Posterior cingulate gyrus (tissue), 11 donors: ENCODE measurements at regions of chr7 and their contacts with region 1.

Region 1: DNA sequence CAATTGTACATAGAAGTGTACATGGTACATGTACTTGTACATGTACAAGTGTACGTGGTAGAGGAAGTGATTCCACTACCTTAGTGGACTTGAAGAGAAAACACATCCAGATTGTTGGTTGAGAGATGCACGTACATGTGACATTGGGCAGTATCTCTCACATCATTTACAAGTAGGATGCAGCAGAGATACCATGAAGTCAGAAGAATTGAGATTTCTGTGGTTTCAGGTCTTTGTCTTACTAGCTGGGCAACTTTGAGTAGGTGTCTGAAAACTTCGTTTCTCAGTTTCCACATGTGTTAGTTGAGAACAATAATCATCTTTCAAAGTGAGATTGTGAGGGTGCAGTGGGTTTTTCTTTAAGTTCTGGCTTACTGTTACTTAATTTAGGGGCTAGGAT is 21.5 kb downstream of the CLDN12 start:
- DNase-seq: no peak

Region 2: DNA sequence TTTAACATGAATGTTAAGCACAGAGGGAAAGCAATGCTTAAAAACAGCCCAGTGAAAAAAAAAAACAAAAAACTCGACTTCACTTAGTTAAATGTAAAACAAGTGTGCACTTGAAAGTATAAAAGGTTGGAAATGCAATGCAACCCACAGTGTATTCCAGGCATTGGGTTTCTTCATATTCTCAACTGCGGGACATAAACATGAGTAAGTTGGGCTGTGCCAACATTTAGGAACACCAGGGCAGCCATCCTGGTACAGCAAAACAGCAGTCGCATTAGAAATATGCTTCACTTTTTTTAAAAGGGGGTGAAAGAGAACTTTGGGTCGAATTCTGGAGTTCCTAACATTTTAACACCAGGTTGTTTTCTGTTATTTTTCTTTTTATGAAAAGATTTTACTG is 269.5 kb before region 1 on chr7:
- intact Hi-C with region 1: loop called (anchors 1 kb)
- DNase-seq: no peak

Region 3: DNA sequence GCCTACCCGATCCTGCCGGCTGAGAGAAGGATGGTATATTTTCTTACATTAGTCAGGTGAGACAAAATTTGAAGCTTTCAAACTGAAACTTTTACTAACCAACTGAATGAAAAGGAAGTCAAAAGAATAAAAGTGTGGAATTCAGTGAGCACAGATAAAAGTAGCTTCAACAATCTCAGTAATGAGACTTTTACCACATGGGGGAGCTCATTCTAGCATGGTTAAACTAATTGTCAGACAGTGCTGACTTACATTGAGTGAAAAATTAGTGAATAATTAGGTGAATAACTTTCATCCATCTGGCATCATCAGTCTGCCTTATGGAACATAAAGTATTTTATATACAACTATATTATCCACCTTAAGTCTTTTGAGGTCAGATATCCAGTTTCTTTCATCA is 112.0 kb before region 1 on chr7:
- intact Hi-C with region 1: loop called (anchors 2 kb)
- DNase-seq: no peak

Region 4: DNA sequence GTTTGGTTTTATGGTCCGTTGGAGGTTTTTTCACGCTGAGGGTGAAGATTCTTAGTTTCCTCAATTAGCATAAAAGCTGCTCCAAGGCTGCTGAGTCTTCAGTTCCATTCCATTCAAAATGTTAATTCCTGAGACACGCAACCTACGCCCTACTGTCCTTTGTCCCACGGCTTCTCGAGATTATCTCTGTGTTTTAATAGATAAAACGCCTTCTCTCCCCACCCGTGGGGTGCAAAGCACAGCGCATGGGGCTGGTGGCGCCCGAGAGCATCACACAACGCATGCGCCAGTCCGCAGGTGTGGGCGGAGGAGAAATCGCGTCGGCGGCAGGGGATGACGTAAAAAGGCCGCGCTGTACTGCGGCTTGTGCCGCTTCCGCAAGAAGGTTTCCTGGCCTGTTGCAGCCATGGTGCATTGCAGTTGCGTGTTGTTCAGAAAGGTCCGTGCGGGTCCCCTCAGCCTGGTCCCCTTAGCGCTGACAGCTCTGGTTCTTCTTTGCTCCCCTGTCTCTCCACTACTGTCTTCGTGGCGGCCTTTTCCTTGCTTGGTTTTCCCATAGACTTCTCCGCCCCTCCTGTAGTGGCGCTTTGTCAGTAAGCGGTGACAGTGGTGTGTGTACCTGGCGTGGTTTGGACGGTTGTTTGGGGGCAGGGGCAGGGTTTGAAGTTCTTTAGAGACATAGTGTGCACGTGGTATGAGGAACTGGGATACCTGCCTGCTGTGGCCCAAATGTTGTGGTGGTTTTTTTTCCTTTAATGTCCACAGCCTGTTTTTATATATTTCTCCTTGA is 78.2 kb before region 1 on chr7 and contains the start of gene GTPBP10:
- intact Hi-C with region 1: loop called (anchors 5 kb)
- DNase-seq: peak; percentile 87 to 99 (median 92)